Naive thymus-derived CD4-positive, alpha-beta T cell (primary cell): ENCODE measurements at regions of chr11 and their contacts with region 1.

Region 1: DNA sequence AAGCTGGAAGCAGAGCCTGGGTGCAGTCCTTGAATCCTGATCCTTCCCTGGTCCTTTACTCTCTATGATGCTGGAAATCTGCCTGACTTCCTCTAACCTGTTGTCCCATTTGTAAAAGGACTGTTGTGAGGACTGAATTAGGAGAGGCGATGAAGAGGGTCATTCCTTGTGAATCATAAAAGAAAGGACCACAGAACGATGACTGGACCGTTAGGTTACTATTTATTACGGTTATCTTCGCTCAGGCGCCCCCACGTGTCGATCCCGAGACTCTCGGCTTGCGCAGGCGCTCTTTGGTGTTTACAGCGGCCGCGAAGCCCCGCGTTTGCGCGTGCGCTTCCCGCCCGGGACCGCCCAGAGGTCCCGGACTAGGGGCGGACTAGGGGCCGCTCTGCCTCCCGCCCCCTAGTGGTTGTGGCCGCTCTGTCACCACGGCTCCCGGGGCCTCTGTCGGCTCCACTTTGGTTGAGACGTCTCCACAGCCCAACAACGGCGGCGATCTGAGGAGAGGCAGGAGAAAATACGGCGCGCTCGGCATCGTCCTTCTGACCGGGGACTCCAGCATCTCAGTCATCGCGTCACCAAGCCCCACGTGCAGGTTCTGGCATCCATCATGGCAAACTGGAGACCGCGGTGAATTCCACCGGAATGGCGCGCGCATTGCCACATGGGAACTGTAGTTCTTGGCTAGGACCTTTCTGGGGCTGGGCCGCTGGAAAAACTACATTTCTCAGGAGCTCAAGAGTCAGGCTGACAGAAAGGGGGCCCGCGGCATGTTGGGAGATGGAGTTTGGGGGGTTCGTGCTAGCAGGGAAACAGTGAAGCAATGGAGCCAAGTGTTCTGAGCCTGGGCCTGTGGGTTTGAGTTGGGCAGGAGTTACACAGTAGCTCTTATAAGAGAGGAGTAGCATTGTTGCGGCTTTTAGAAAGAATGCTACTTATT is at the start of gene STARD10:
- DNase-seq: peak; percentile 90 to 97 (median 96)
- ATAC-seq: peak; percentile 97
- H3K4me3 ChIP-seq: peak within 1 kb of the TSS; percentile 89
- H3K4me3 Mint-ChIP-seq: peak within 1 kb of the TSS; percentile 78 to 100 (median 98)
- H3K27ac ChIP-seq: peak within 1 kb of the TSS; percentile 99
- H3K27ac Mint-ChIP-seq: peak within 1 kb of the TSS; percentile 99 to 100 (median 99)
- H3K4me1 ChIP-seq: peaks cover 16 to 18% of the 10 kb centered on the region in 2 donors
- H3K4me1 Mint-ChIP-seq: peaks cover 19 to 35% (median 28%) of the 10 kb centered on the region in 7 donors
- H3K27me3 ChIP-seq: no peaks in the 10 kb centered on the region
- H3K27me3 Mint-ChIP-seq: no peaks in the 10 kb centered on the region
- total RNA-seq, gene STARD10: 10.9 to 26.1 (median 16.4) TPM

Region 2: GRCh38 chr11:72683782-72684200 is 109.9 kb before region 1 on chr11:
- CTCF ChIA-PET with region 1: interaction called, 3 read pairs
- POLR2A ChIA-PET with region 1: interaction called, 6 read pairs
- intact Hi-C with region 1: loop called in 1 of 2 experiments (anchors 1 kb)
- DNase-seq: peak; percentile 36 to 75 (median 56)
- ATAC-seq: peak; percentile 77
- H3K4me3 ChIP-seq: no peak overlapping the region
- H3K4me3 Mint-ChIP-seq: no peak overlapping the region
- H3K27ac ChIP-seq: no peak overlapping the region
- H3K27ac Mint-ChIP-seq: peak overlapping the region in 3 of 9 donors; percentile 59 to 74 (median 61)
- H3K4me1 ChIP-seq: no peaks in the 10 kb centered on the region
- H3K4me1 Mint-ChIP-seq: peaks cover 7 to 46% (median 16%) of the 10 kb centered on the region in 7 donors
- H3K27me3 ChIP-seq: no peaks in the 10 kb centered on the region
- H3K27me3 Mint-ChIP-seq: peaks cover 0 to 11% (median 0%) of the 10 kb centered on the region in 5 donors

Region 3: GRCh38 chr11:72736452-72737069 is 57.1 kb before region 1 on chr11:
- CTCF ChIA-PET with region 1: interaction called, 14 read pairs
- POLR2A ChIA-PET with region 1: interaction called, 10 read pairs
- intact Hi-C with region 1: loop called in 1 of 2 experiments (anchors 1 kb)
- DNase-seq: peak; percentile 47 to 83 (median 79)
- ATAC-seq: peak; percentile 86
- H3K4me3 ChIP-seq: peak overlapping the region; percentile 21
- H3K4me3 Mint-ChIP-seq: peak overlapping the region; percentile 61 to 87 (median 72)
- H3K27ac ChIP-seq: peak overlapping the region; percentile 67
- H3K27ac Mint-ChIP-seq: peak overlapping the region; percentile 89 to 99 (median 97)
- H3K4me1 ChIP-seq: peaks cover 33 to 44% of the 10 kb centered on the region in 2 donors
- H3K4me1 Mint-ChIP-seq: peaks cover 49 to 70% (median 59%) of the 10 kb centered on the region in 7 donors
- H3K27me3 ChIP-seq: no peaks in the 10 kb centered on the region
- H3K27me3 Mint-ChIP-seq: no peaks in the 10 kb centered on the region

Region 4: DNA sequence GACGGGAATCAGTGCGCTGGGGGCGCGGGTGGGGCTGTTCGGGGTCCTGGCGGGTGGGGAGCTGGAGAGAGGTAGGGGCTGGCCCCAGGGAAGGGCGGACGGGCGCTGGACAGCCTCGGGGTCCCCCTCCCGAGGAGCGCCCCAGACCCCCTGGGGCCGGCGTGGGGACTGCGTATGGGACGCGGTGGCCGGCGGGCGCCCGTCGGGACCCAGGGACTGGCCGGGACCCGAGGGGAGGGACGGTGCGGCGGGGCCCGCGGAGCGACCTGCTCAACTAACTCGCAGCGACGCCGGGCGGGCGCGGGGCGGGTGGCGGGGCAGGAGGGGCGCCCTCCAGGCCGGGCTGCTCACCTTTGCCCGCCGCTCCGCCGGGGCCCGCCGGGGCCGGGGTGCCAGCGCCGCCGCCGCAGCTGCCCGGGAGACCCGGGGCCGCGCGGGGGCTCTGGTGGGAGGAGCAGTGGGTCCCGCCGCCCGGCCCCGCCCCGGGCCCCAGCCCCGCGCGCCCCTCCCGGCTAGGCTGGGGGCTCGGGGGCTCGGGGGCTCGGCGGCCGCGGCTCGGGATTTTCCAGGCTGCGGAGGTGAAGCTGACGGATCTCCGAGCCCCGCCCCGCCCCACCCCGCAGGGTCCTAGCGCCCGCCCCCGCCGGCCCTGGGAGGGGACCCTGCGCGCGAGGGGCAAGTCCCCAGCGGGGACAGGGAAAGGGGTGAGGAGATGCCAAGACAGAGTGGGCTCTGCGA is 12.2 kb before region 1 on chr11:
- CTCF ChIA-PET with region 1: interaction called, 7 read pairs
- POLR2A ChIA-PET with region 1: interaction called, 16 read pairs
- intact Hi-C with region 1: loop called in 1 of 2 experiments (anchors 1 kb)
- DNase-seq: peak; percentile 39 to 68 (median 49)
- ATAC-seq: peak; percentile 92
- H3K4me3 ChIP-seq: peak overlapping the region; percentile 52
- H3K4me3 Mint-ChIP-seq: peak overlapping the region; percentile 73 to 89 (median 84)
- H3K27ac ChIP-seq: peak overlapping the region; percentile 71
- H3K27ac Mint-ChIP-seq: peak overlapping the region in 8 of 9 donors; percentile 11 to 84 (median 68)
- H3K4me1 ChIP-seq: peaks cover 7 to 14% of the 10 kb centered on the region in 2 donors
- H3K4me1 Mint-ChIP-seq: peaks cover 23 to 34% (median 27%) of the 10 kb centered on the region in 7 donors
- H3K27me3 ChIP-seq: no peaks in the 10 kb centered on the region
- H3K27me3 Mint-ChIP-seq: peaks cover 0 to 6% (median 0%) of the 10 kb centered on the region in 5 donors

Region 5: GRCh38 chr11:73053964-73054363 is 260.3 kb after region 1 on chr11:
- CTCF ChIA-PET with region 1: no interaction called
- POLR2A ChIA-PET with region 1: no interaction called
- intact Hi-C with region 1: no loop called
- DNase-seq: no peak
- ATAC-seq: no peak
- H3K4me3 ChIP-seq: no peak overlapping the region
- H3K4me3 Mint-ChIP-seq: no peak overlapping the region
- H3K27ac ChIP-seq: no peak overlapping the region
- H3K27ac Mint-ChIP-seq: peak overlapping the region in 1 of 9 donors; percentile 46
- H3K4me1 ChIP-seq: no peaks in the 10 kb centered on the region
- H3K4me1 Mint-ChIP-seq: peaks cover 16 to 31% (median 19%) of the 10 kb centered on the region in 7 donors
- H3K27me3 ChIP-seq: no peaks in the 10 kb centered on the region
- H3K27me3 Mint-ChIP-seq: no peaks in the 10 kb centered on the region